K562 (cell line): ENCODE measurements at regions of chr9 and their contacts with region 1.

Region 1: DNA sequence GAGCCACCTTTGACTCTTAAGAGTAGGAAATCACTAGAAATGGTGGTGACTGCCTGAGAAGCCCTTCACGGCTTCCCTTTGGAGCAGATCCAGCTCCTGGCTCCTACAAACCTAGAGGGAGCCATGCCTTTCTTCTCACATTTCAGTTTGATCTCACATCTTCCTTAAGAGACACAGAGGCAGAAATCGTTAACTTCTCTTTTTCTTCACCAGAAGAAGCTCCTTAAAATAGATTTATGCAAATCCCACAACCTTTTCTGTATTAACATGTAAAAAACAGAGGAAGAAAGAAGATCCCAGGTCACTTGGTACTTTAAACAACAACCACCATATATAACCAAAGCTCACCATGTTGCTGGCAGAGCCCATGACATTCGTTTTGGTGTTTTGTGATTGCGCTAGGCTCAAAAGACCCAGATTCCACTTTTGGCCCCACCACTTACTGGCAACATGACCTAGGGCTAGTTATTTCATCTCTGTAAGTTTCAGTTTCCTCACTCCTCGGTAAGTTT is 29.6 kb downstream of the PAX5 start:
- DNase-seq: no peak
- ATAC-seq: no peak
- H3K4me3 ChIP-seq: no peak overlapping the region
- H3K27ac ChIP-seq: no peak overlapping the region
- H3K4me1 ChIP-seq: no peaks in the 10 kb centered on the region; a peak in 1 of 5 replicates
- H3K27me3 ChIP-seq: peaks cover 16 to 49% of the 10 kb centered on the region in 2 experiments; a peak in 4 of 5 replicates
- CTCF ChIP-seq: no peak
- EP300 ChIP-seq: no peak
- POLR2A ChIP-seq: no peak
- RAD21 ChIP-seq: no peak

Region 2: GRCh38 chr9:37156781-37157356 is 152.4 kb after region 1 on chr9:
- CTCF ChIA-PET with region 1: no interaction called
- POLR2A ChIA-PET with region 1: no interaction called
- in situ Hi-C with region 1: no loop called
- intact Hi-C with region 1: no loop called
- DNase-seq: no peak
- ATAC-seq: no peak
- H3K4me3 ChIP-seq: no peak overlapping the region
- H3K27ac ChIP-seq: no peak overlapping the region
- H3K4me1 ChIP-seq: no peaks in the 10 kb centered on the region
- H3K27me3 ChIP-seq: no peaks in the 10 kb centered on the region
- CTCF ChIP-seq: no peak
- EP300 ChIP-seq: no peak
- POLR2A ChIP-seq: no peak
- RAD21 ChIP-seq: no peak

Region 3: DNA sequence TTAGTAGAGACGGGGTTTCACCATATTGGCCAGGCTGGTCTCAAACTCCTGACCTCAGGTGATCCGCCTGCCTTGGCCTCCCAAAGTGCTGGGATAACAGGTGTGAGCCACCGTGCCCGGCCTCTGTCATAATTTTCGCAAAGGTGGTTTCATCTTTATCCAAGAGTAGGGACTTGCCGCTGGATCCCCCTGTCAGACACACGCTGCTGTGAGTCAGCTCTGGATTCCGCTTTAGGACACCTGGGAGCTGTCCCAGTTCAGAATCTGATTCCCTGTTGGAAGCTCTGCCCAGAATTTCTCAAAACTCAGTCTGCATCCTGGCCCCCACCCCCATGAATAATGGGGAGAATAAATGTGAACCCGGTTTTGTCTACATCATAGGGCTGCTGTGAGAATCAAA is 400.1 kb after region 1 on chr9:
- CTCF ChIA-PET with region 1: no interaction called
- POLR2A ChIA-PET with region 1: no interaction called
- in situ Hi-C with region 1: loop called (anchors 5 kb)
- intact Hi-C with region 1: no loop called
- DNase-seq: no peak
- ATAC-seq: no peak
- H3K4me3 ChIP-seq: no peak overlapping the region
- H3K27ac ChIP-seq: no peak overlapping the region
- H3K4me1 ChIP-seq: peaks cover 5 to 8% of the 10 kb centered on the region in 2 experiments; a peak in 4 of 5 replicates
- H3K27me3 ChIP-seq: peaks cover 0 to 5% of the 10 kb centered on the region in 2 experiments; a peak in 3 of 5 replicates
- CTCF ChIP-seq: no peak
- EP300 ChIP-seq: no peak
- POLR2A ChIP-seq: no peak
- RAD21 ChIP-seq: no peak